ENCODE measurements at regions of chr12 and their contacts with region 1.

Region 1: DNA sequence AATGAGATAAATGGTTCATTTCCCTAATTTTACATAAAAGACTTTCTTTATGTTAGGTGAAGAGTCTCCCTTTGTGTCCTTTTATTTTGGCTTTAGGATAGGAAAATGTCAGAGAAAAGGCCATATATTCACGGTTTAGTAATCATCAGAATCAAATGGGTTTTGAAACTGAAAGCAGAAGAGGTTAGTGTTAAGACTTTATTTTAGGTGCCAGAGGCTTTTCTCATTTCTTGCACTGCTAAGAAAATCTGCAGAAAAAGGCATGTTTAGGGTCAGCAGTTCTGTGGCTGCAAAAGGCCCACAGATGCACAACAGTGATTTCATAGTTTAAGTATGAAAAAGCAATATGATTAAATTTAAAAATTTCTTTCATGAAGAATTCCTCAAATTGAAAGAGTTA is 80.4 kb upstream of the SINHCAF start:
- DNase-seq: peak; percentile 60
- CTCF ChIP-seq: no peak

Region 2: DNA sequence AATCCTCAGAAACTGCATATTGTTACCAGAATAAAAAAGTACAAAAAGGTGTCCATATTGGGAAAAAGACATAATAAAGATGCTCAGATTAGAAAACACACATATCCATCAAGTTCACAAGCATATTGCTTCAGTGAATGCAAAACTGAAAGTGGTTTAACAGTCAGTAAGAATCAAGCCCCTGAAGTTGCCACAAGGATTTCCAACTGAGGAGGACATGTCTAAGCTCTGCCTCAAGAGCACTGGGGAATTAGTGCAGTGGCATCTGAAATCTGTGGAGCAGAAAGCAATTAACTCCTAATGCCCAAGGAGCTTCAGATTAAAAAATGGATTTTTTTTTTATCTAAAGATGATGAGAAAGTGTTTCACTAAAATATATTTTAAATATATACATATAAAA is 71.3 kb after region 1 on chr12:
- in situ Hi-C with region 1: no loop called
- DNase-seq: no peak
- CTCF ChIP-seq: no peak

Region 3: DNA sequence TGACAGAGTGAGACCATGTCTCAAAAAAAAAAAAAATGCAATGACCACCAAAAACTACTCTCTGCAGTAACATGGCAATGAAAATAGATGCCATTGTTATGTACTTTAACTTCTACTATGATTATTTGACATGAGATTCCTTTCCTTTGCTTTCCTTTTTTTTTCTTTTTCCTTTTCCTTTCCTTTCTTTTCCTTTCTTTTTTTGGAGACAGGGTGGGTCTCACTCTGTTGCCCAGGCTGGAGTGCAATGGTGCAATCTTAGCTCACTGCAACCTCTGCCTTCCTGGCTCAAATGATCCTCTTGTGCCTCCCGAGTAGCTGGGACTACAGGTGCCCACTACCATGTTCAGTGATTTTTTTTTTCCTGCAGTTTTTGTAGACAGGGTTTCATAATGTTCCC is 228.3 kb after region 1 on chr12:
- in situ Hi-C with region 1: loop called (anchors 5 kb)
- DNase-seq: no peak
- CTCF ChIP-seq: no peak